Breast epithelium (tissue), 4 donors: ENCODE measurements at regions of chr3 and their contacts with region 1.

Region 1: GRCh38 chr3:46184469-46184868 is 23.6 kb downstream of the CCR1 start:
- DNase-seq: no peak
- H3K4me3 ChIP-seq: no peak overlapping the region
- H3K27ac ChIP-seq: no peak overlapping the region
- H3K4me1 ChIP-seq: no peaks in the 10 kb centered on the region
- H3K27me3 ChIP-seq: no peaks in the 10 kb centered on the region
- CTCF ChIP-seq: no peak
- POLR2A ChIP-seq: no peak

Region 2: GRCh38 chr3:45092132-45093031 is 1092.1 kb before region 1 on chr3:
- intact Hi-C with region 1: loop called (anchors 5 kb)
- DNase-seq: no peak
- H3K4me3 ChIP-seq: no peak overlapping the region
- H3K27ac ChIP-seq: no peak overlapping the region
- H3K4me1 ChIP-seq: no peaks in the 10 kb centered on the region
- H3K27me3 ChIP-seq: no peaks in the 10 kb centered on the region
- CTCF ChIP-seq: no peak
- POLR2A ChIP-seq: no peak

Region 3: GRCh38 chr3:46163318-46164041 is 21.0 kb before region 1 on chr3:
- intact Hi-C with region 1: no loop called
- DNase-seq: no peak
- H3K4me3 ChIP-seq: no peak overlapping the region
- H3K27ac ChIP-seq: peak overlapping the region; percentile 33 to 66
- H3K4me1 ChIP-seq: no peaks in the 10 kb centered on the region
- H3K27me3 ChIP-seq: no peaks in the 10 kb centered on the region
- CTCF ChIP-seq: no peak
- POLR2A ChIP-seq: no peak